ENCODE measurements at regions of chr22 and their contacts with region 1.

Region 1: GRCh38 chr22:20916983-20917810 is at the start of gene CRKL:
- DNase-seq: peak; percentile 97
- ATAC-seq: peak; percentile 99
- total RNA-seq, gene CRKL: 48.7 to 50.2 TPM

Region 2: GRCh38 chr22:20867179-20868024 is 49.8 kb before region 1 on chr22:
- intact Hi-C with region 1: loop called in 1 of 2 experiments (anchors 10 kb)
- DNase-seq: peak; percentile 67
- ATAC-seq: peak; percentile 86 to 87

Region 3: DNA sequence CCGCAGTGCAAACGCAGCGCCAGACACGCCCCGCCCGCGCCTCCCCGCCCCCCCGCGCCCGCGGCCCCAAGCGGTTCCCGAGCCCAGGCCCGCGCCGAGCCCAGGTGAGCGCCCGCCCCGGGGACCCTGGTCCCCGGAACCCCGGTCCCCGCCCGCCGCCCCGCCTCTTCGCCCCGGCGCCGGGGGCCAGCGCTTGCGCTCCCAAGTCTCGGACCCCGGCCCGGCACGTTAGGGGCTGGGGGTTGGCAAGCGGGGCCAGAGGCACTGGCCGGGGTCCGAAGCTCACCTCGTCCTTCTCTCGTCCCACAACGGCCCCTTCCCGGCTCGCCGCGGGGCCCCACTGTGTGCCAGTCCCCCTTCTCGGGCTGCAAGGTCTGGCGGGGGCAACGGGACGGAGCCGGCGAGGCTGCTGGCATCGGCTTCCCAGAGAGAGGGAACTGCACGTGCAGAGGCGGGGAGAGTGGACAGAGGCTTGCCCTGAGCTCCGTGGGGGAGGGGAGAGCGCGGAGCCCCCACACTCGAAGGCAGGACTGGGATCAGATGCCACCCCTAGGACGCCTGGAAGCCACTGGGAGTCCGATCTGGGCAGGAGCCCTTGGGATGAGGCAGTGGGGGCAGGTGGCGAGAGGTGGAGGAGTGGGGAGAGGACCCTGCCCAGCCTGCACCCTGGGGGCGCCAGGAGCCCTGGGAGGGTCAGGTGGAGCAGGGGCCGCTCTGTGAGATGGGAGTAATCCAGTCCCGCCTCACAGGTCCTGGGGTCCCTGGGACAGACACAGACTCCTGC is 48.1 kb after region 1 on chr22:
- intact Hi-C with region 1: loop called in 1 of 2 experiments (anchors 5 kb)
- DNase-seq: no peak
- ATAC-seq: peak in 1 of 2 donors; percentile 4